ENCODE measurements at regions of chr2 and their contacts with region 1.

Region 1: DNA sequence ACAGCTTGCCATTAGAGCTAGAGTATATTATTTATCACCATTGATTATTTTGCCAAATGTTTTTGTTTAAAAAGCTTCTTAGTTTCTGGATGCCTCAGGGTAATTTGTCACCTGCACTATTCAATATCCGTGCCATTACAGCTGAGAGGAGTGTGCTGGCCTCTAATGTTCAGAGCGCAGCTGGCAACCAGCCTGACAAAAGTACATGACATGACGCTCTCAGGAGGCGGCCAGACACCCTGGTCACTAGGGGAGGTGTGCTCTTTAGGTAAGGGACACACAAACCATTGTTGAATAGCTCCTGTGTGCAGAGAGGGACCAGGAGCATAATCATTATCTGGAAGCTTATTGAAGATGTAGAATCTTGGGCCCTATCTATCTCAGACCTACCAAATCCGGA is 20.3 kb downstream of the LIMS1 start:
- DNase-seq: peak; percentile 53 to 58
- ATAC-seq: peak; percentile 62 to 95 (median 84)
- H3K4me3 ChIP-seq: no peak overlapping the region
- H3K27ac ChIP-seq: peak overlapping the region in 9 of 10 donors; percentile 21 to 75 (median 65)
- H3K4me1 ChIP-seq: peaks cover 19 to 60% (median 44%) of the 10 kb centered on the region in 9 donors
- H3K27me3 ChIP-seq: no peaks in the 10 kb centered on the region
- CTCF ChIP-seq: no peak

Region 2: GRCh38 chr2:108403494-108403893 is 151.0 kb before region 1 on chr2:
- intact Hi-C with region 1: no loop called
- DNase-seq: no peak
- ATAC-seq: no peak
- H3K4me3 ChIP-seq: no peak overlapping the region
- H3K27ac ChIP-seq: no peak overlapping the region
- H3K4me1 ChIP-seq: no peaks in the 10 kb centered on the region
- H3K27me3 ChIP-seq: no peaks in the 10 kb centered on the region
- CTCF ChIP-seq: no peak

Region 3: DNA sequence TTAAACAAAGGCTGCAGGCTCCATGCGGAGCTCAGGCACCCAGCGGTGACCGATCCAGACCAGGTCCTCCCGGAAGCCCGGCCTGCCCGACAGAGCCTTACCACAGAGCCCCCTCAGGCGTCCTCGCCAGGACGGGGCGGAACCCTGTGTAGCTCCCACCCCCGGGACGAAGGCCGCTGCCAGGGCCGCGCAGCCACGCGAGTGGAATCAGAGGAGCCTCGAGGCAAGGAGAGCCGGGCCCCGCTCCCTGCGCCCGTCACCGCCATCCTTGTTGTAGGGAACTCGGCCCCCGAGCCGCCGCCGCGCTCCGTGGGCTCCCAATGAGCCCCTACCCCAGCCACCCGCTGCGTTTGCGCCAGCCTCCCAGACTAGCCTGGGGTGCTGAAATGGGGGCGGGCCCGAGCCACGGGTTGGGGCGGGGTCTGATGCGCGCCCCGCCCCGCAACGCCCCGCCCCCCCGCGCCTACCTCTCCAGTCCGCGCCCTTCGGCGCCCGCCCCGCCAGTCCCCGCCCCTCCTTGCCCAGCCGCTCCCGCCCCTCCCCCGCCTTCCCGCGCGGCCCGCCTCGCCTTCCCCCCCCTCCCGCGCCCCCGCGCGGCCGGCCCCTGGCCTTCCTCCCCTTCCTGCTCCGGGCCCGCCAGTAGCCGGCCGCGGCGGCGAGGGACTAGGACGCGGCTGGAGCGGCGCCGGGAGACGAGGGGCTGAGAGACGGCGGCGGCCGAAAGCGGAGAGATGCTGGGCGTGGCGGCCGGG is 20.5 kb before region 1 on chr2 and contains the start of gene LIMS1:
- intact Hi-C with region 1: loop called in 1 of 10 experiments (anchors 2 kb)
- DNase-seq: peak; percentile 93 to 95
- ATAC-seq: peak; percentile 96 to 99 (median 97)
- H3K4me3 ChIP-seq: peak within 1 kb of the TSS; percentile 62 to 87 (median 76)
- H3K27ac ChIP-seq: peak within 1 kb of the TSS; percentile 73 to 96 (median 89)
- H3K4me1 ChIP-seq: peaks cover 4 to 31% (median 26%) of the 10 kb centered on the region in 9 donors
- H3K27me3 ChIP-seq: no peaks in the 10 kb centered on the region
- CTCF ChIP-seq: peak in 1 of 9 donors; percentile 28
- total RNA-seq, gene LIMS1: 69.7 to 122 (median 78.9) TPM

Measured in heart right ventricle (tissue), 16 donors.